Sciatic nerve (tissue), 2 donors: ENCODE measurements at regions of chr17 and their contacts with region 1.

Region 1: DNA sequence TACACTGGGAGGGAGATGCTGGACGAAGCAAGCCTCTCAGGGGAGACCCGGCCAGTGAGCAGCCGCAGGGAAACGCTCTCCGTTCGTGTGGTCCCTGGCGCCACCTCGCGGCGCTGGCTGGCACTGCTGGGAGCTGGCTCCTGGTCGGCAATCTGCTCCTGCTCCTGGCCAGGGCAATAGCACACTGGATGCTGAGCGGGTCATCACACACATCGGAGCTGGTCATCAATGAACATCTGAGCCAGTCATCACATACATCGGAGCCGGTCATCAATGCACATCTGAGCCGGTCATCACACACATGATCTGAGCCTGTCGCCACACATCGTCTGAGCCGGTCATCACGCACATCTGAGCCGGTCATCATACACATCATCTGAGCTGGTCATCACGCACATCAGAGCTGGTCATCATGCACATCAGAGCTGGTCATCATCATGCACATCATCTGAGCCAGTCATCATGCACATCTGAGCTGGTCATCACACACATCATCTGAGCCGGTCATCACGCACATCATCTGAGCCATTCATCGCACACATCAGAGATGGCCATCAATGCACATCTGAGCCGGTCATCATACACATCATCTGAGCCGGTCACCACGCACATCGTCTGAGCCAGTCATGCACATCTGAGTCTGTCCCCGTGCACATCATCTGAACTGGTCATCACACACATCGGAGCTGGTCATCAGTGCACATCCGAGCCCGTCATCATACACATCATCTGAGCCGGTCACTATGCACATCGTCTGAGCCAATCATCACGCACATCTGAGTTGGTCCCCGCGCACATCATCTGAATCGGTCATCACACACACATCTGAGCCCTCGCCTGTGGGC is 217.3 kb downstream of the RBFOX3 start:
- DNase-seq: peak; percentile 88
- ATAC-seq: peak; percentile 83

Region 2: DNA sequence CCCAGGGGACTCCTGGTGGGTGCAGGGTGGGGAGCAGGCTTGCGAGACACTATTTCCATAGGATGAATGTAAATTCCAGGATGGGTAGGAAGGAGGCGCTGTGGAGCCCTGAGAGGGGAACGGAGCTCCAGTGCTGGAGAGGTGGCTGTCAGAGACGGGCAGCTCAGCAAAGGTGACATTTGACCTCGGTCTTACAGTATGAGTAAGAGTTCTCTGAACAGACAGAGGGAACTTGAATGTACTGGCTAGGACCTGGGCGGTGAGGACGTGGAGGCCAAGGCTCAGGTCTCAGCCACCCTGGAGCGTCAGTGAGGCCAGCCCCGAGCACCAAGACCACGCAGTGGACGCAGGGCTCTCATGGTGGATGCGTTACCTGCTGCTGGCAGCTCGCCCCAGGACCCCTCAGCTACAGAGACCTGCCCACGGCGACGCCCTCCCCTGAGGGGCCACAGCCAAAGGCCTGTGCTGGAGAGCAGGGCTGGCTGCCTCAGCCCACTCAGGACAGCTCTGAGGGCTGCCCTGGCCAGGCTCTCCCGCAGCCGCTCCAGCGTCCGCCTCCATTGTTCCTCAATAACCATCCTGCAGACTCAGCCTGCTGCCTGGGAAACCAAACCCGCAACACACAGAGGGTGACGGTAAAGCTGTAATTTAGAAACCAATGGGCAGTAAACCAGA is 1501.0 kb before region 1 on chr17:
- intact Hi-C with region 1: loop called (anchors 10 kb)
- DNase-seq: peak; percentile 54
- ATAC-seq: no peak

Region 3: GRCh38 chr17:79011456-79012147 is 382.0 kb before region 1 on chr17:
- intact Hi-C with region 1: no loop called
- DNase-seq: peak; percentile 19
- ATAC-seq: no peak

Region 4: DNA sequence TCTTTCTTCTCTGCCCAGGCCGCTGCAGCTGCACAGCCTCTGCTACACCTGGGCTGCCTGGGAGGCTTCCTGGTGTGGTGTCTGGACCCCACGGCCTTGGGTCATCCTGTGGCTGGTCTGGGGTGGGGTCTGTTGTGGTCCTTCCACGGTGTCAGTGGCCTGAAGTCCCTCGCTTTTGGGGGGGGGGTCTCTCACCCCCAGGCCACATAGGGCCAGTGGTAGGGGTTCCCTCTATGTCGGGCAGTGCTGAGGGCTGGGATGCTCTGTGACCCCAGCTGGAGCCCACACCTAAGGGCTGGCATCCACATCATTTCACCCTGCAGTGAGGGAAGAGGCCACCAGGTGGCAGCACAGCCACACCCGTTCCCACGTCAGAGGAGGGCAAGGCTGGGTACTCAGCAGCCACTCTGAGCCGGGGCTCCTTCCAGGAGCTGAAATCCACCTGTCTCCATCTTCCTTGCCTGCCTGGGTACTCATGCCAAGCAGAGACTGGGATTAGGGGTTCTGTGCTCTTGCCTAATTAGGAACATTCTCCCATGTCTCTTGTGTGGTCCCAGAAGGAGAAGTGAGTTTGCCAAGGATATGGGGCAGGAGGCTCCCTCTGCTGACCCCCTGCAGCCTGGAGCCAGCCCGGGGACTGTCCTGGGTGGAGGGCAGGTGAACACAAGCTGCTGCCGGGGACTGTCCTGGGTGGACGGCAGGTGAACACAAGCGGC is 306.0 kb before region 1 on chr17:
- intact Hi-C with region 1: loop called (anchors 5 kb)
- DNase-seq: peak; percentile 87
- ATAC-seq: peak; percentile 67

Region 5: GRCh38 chr17:79365836-79366770 is 27.5 kb before region 1 on chr17:
- intact Hi-C with region 1: no loop called
- DNase-seq: no peak
- ATAC-seq: no peak

Region 6: GRCh38 chr17:79459003-79459655 is 65.5 kb after region 1 on chr17:
- intact Hi-C with region 1: no loop called
- DNase-seq: no peak
- ATAC-seq: no peak

Region 7: GRCh38 chr17:79707931-79708891 is 314.6 kb after region 1 on chr17:
- intact Hi-C with region 1: loop called (anchors 10 kb)
- DNase-seq: peak; percentile 80
- ATAC-seq: peak; percentile 65